Heart left ventricle (tissue), 16 donors: ENCODE measurements at regions of chr17 and their contacts with region 1.

Region 1: DNA sequence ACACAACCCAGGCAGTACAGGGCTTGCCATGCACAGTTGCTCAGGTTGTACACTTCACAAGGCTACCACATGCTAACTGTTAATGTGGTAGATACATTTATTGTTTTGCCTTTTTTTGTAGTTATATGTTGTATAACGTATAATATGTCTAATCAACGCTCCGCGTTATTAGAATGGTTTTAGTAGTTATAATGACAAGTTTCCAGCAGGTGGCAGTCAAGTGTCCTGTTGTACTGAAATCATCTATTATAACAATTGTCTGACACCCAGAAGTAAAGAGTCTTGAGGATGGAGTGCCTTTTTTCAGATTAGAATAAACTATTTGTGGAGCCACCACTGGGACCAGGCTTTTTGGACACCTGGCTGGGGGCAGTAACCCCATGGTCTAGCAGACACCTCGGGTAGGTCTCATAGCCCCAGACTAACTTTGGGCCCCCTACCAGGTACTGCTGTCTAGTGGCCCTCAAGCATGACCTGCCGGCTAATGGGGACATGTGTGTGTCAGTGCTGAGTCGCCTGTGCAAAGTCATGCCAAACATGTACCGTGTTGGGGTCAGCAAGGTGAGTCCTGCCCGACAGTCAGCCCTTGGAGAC is 32.8 kb downstream of the MYO15A start:
- DNase-seq: peak in 1 of 5 donors; percentile 27
- ATAC-seq: peak in 2 of 4 donors; percentile 27 to 55
- H3K4me3 ChIP-seq: no peak overlapping the region
- H3K27ac ChIP-seq: no peak overlapping the region
- H3K4me1 ChIP-seq: peaks cover 0 to 7% (median 0%) of the 10 kb centered on the region in 12 donors
- H3K27me3 ChIP-seq: no peaks in the 10 kb centered on the region
- CTCF ChIP-seq: peak; percentile 49 to 81 (median 68)
- POLR2A ChIP-seq: no peak

Region 2: DNA sequence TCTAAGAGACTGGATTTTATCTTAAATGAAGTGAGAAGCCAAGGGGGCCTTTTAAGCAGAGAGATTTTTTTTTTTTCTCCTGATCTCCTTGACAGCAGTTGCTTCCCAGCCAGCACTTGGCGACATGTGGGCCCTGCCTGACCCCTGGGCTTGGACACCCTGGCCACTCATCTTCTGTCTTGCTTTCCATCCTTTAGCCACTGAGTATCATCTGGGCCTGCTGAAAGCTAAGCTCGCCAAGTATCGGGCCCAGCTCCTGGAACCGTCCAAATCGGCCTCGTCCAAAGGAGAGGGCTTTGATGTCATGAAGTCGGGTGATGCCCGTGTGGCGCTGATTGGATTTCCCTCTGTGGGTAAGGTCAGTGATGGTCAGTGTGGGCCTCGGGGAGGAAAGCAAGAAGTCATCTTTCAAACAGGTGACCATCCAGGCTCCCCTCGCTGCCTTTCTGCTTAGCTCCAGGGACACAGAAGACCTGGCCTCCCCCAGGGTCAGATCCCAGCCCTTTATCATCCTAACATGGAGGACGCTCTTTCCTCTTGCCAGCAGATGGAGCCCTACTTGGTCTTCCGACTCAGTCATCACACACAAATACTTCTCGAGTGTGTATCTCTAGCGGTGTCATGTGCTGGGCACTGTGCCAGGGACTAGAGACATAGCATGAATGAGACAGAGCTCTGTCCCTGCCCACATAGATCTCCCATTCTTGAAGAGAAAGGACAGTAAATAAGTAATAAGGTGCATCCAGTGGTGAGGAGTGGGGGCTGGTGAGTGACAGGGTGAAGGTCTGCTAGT is 47.5 kb before region 1 on chr17:
- intact Hi-C with region 1: no loop called
- DNase-seq: peak in 4 of 5 donors; percentile 41 to 81 (median 60)
- ATAC-seq: peak; percentile 55 to 83 (median 63)
- H3K4me3 ChIP-seq: no peak overlapping the region
- H3K27ac ChIP-seq: no peak overlapping the region
- H3K4me1 ChIP-seq: peaks cover 0 to 9% (median 3%) of the 10 kb centered on the region in 12 donors
- H3K27me3 ChIP-seq: no peaks in the 10 kb centered on the region
- CTCF ChIP-seq: peak in 6 of 12 donors; percentile 14 to 51 (median 34)
- POLR2A ChIP-seq: no peak

Region 3: DNA sequence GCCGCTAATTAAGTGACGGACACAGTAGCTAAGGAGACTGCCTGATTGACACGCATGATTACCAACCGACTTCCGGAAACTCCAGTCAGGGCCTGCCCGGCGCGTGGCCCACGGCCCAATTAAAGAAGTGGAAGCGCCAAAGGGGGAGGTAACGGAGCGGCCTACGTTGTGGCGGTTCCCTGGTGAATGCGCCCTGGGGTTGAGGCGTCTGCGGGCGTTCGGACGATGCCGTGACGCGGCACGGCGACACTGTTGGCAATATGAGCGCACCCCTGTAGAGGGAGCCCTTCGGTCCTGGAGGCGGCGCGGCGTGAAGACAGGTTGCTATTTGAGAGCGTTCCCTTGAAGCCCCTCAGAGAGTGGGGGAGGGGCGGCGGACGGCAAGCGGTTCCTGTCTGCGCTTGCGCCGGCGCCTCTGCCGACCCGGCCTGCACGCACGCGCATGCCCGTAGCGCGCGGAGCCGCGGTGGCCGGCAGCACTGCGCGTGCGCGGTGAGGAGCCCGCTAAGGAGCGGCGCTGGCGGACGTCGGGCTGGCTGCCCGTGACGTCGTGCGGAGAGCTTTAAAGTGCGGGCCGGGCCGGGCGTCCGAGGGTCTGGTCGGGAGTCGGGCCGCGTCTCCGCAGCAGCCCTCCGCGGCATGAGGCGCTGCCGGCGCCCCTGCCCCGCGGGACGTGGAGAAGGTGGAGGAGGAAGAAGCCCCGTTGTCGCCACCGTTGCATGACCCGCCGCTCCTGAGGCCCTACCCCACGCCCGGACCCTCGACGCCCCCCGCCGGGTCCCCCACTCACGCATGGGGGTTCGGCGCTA is 42.2 kb after region 1 on chr17 and contains the start of gene ALKBH5:
- intact Hi-C with region 1: loop called in 2 of 10 experiments (anchors 5 kb)
- DNase-seq: peak; percentile 97 to 99 (median 98)
- ATAC-seq: peak; percentile 91 to 96 (median 94)
- H3K4me3 ChIP-seq: peak within 1 kb of the TSS; percentile 56 to 99 (median 92)
- H3K27ac ChIP-seq: peak within 1 kb of the TSS; percentile 93 to 100 (median 98)
- H3K4me1 ChIP-seq: peaks cover 13 to 66% (median 47%) of the 10 kb centered on the region in 12 donors
- H3K27me3 ChIP-seq: no peaks in the 10 kb centered on the region
- CTCF ChIP-seq: peak in 11 of 12 donors; percentile 2 to 50 (median 28)
- POLR2A ChIP-seq: peak in 1 of 2 donors; percentile 94
- total RNA-seq, gene ALKBH5: 147 to 233 (median 198) TPM

Region 4: DNA sequence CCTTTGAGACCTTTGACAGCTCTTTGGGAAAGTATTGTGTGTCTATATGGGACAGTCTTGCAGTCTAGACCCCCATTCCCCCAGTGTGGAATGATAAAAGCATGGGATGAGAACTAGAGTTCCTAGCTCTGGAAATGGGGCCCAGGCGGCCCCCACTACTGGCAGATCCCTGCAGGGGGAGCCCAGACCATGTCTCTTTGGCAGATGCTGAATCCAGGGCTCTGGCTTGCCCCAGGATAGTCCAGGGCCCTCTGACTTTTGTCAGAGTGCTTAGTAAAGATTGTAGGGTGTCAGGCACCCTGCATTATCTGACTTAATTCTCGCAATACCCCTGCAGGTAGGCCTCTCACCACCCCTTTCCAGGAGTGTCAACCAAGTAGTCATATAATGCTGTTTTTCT is 50.7 kb after region 1 on chr17:
- intact Hi-C with region 1: loop called in 4 of 10 experiments (anchors 5 to 10 kb)
- DNase-seq: no peak
- ATAC-seq: peak in 3 of 4 donors; percentile 8 to 23 (median 14)
- H3K4me3 ChIP-seq: no peak overlapping the region
- H3K27ac ChIP-seq: peak overlapping the region in 8 of 12 donors; percentile 2 to 75 (median 44)
- H3K4me1 ChIP-seq: peaks cover 16 to 95% (median 70%) of the 10 kb centered on the region in 12 donors
- H3K27me3 ChIP-seq: no peaks in the 10 kb centered on the region
- CTCF ChIP-seq: peak in 7 of 12 donors; percentile 4 to 32 (median 24)
- POLR2A ChIP-seq: no peak

Region 5: GRCh38 chr17:18203308-18203707 is 62.0 kb after region 1 on chr17:
- intact Hi-C with region 1: loop called in 3 of 10 experiments (anchors 5 to 10 kb)
- DNase-seq: no peak
- ATAC-seq: peak in 2 of 4 donors; percentile 8 to 23
- H3K4me3 ChIP-seq: no peak overlapping the region
- H3K27ac ChIP-seq: no peak overlapping the region
- H3K4me1 ChIP-seq: peaks cover 0 to 74% (median 36%) of the 10 kb centered on the region in 12 donors
- H3K27me3 ChIP-seq: no peaks in the 10 kb centered on the region
- CTCF ChIP-seq: no peak
- POLR2A ChIP-seq: no peak

Region 6: GRCh38 chr17:18217412-18218015 is 76.2 kb after region 1 on chr17:
- intact Hi-C with region 1: loop called in 5 of 10 experiments (anchors 5 to 10 kb)
- DNase-seq: peak; percentile 60 to 85 (median 74)
- ATAC-seq: peak; percentile 78 to 90 (median 88)
- H3K4me3 ChIP-seq: no peak overlapping the region
- H3K27ac ChIP-seq: no peak overlapping the region
- H3K4me1 ChIP-seq: peaks cover 0 to 15% (median 1%) of the 10 kb centered on the region in 12 donors
- H3K27me3 ChIP-seq: no peaks in the 10 kb centered on the region
- CTCF ChIP-seq: peak; percentile 86 to 92 (median 90)
- POLR2A ChIP-seq: no peak

Region 7: DNA sequence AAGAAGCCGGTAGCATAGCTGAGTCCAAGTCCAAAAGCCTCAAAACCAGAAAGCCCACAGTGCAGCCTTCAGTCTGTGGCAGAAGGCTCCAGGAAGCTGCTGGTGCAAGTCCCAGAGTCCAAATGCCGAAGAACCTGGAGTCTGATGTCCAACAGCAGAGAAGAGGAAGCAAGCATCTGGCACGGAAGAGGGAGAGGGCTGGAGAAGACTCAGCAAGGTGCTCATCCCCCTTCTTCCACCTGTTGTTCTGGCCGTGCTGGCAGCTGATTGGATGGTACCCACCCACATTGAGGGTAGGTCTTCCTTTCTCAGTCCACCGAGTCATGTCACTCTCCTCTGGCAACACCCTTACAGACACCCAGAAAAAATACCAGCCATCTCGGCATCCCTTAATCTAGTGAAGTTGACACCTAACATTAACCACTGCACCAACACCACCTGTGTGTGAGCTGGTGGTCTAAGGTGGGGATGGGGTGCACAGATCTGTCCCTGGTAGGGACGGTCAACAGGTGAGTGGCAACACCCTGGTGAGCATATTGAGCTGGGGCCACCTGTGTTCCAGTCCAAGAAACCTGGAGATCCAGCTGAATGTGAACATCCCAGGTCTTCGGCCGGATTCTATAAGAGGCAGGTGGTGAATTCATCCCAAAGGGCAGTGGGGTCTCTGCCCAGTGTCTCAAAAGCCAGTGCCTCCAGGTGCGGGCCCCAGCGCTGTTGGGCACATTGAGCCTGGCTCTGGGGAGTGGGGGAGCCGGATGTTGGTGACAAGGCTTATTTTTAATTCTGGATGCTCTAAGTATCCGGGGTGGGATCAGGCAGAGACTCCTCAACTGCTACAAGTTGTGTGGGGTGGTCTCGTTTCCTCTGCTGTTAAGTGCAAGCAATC is 129.0 kb after region 1 on chr17:
- intact Hi-C with region 1: no loop called
- DNase-seq: no peak
- ATAC-seq: no peak
- H3K4me3 ChIP-seq: no peak overlapping the region
- H3K27ac ChIP-seq: no peak overlapping the region
- H3K4me1 ChIP-seq: no peaks in the 10 kb centered on the region
- H3K27me3 ChIP-seq: no peaks in the 10 kb centered on the region
- CTCF ChIP-seq: no peak
- POLR2A ChIP-seq: no peak